Sigmoid colon (tissue), 7 donors: ENCODE measurements at regions of chr2 and their contacts with region 1.

Region 1: DNA sequence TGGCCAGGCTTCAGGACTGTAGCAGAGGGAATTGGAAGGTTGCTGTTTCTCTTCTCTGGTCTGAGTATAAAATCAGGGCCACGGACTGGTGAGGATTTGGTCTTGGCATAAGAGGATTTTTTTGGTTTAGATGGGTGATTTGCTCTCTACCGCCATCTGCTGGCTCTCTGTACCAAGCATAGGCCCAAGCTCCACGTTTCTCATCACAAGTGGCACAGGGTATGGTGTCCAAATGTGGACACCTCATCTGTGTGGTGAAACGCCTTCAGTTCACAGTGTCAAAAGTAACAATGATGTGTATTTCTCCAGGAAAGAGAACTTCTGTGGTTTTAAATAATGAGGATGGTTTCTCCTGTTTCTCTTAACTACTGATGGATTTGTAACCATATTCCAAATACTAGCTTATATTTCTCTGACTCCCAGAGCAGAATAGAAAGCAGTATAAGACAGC is 115.1 kb downstream of the EML6 start:
- DNase-seq: peak; percentile 81
- H3K4me3 ChIP-seq: no peak overlapping the region
- H3K27ac ChIP-seq: no peak overlapping the region
- H3K4me1 ChIP-seq: no peaks in the 10 kb centered on the region
- H3K27me3 ChIP-seq: no peaks in the 10 kb centered on the region
- CTCF ChIP-seq: peak; percentile 35 to 92 (median 76)
- EP300 ChIP-seq: no peak
- POLR2A ChIP-seq: no peak

Region 2: DNA sequence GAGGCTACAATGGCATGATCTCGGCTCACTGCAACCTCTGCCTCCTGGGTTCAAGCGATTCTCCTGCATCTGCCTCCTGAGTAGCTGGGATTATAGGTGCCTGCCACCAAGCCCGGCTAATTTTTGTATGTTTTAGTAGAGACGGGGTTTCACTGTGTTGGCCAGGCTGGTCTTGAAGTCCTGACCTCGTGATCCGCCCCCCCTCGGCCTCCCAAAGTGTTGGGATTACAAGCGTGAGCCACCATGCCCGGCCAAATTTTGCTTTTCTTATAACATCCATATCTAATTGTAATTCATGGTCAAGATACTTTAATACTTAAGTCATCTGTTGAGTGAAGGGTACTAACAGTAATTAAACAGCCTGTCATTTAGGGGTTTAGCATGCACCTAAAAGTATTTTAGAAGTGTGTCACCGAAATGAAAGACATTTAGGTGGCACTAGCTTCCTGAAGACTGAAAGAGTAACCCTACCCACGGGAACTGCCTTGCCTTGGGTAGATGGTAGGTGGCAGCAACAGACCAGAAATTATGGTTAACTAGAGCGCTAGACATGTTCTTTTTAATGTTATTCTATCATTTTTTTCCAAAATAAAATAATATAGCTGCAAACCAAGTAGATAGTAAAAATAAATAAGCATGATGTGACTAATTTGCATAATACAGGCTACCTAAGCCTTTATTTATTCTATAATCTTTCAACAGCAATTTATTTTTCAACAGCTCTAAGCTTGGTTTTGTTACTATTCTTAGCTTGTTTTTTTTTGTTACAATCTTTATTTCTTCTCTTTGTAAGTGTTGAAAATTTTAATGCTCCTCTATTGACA is 731.8 kb before region 1 on chr2:
- intact Hi-C with region 1: loop called (anchors 5 kb)
- DNase-seq: no peak
- H3K4me3 ChIP-seq: no peak overlapping the region
- H3K27ac ChIP-seq: no peak overlapping the region
- H3K4me1 ChIP-seq: peaks cover 0 to 7% (median 0%) of the 10 kb centered on the region in 4 donors
- H3K27me3 ChIP-seq: no peaks in the 10 kb centered on the region
- CTCF ChIP-seq: peak in 3 of 4 experiments; percentile 12 to 38 (median 22)
- EP300 ChIP-seq: no peak
- POLR2A ChIP-seq: no peak

Region 3: DNA sequence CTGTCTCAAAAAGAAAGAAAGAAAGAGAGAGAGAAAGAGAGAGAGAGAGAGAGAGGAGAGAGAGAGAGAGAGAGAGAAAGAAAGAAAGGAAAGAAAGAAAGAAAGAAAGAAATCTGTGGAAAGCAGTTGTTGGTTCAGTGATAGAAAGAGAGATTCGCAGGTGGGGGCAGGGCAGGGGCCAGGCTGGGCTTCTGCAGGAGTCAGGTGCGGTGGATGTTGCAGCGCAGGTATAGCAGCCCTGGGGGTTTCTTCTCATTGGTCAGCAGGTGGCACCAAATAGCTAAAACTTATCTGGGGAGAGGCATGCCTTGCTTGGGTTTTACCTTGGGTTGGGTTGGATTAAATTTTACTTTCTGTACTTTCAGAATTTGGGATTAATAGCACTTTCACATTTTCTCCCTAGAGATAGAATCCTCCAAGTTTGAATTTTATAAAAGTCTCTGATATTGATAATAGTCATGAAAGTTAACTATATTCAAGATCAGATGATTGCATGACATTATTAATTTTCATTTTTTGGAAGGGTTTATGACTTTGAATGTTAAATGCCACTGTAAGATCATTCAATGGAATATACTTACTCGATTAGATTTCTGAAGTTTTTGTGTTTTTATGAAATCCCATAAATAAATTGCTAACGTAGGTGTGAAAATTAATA is 315.9 kb before region 1 on chr2:
- intact Hi-C with region 1: loop called (anchors 5 kb)
- DNase-seq: no peak
- H3K4me3 ChIP-seq: no peak overlapping the region
- H3K27ac ChIP-seq: no peak overlapping the region
- H3K4me1 ChIP-seq: peaks cover 0 to 53% (median 32%) of the 10 kb centered on the region in 4 donors
- H3K27me3 ChIP-seq: no peaks in the 10 kb centered on the region
- CTCF ChIP-seq: peak; percentile 4 to 54 (median 44)
- EP300 ChIP-seq: no peak
- POLR2A ChIP-seq: no peak

Region 4: DNA sequence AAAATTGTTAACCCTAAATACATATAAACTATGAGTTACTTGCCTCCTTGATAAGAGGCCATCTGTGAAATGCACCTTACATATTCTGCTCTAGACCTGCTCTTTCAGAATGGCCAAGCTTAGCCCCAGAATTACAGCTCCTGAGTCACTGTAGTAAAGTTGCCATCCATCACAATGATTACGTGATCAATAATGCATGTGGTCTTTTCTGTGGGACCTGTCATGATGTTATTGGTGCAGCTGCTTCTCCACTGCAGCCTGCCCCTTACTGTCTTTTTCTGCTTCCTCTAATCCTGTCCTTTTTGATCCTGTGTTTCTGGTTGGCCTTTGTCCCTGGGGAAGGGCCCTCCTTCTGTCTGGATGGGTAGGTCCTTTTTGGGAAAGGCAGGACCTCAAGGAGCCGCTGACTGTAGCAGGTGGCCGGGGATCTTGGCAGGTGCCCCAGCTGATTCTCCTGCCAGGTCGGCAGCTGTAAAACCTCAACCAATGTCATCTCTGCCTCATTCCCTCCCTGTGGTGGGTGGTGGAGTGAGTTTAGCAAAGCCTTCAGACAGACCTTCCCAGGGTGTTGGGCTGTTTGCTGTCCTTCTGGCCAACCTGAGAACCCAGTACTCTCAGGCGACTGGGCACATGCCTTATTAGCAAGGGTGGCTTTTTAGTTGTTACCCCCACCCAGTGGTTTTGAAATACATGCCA is 241.3 kb before region 1 on chr2:
- intact Hi-C with region 1: no loop called
- DNase-seq: peak; percentile 90
- H3K4me3 ChIP-seq: no peak overlapping the region
- H3K27ac ChIP-seq: peak overlapping the region; percentile 57 to 69 (median 64)
- H3K4me1 ChIP-seq: peaks cover 0 to 75% (median 68%) of the 10 kb centered on the region in 4 donors
- H3K27me3 ChIP-seq: no peaks in the 10 kb centered on the region
- CTCF ChIP-seq: no peak
- EP300 ChIP-seq: peak in 1 of 4 donors; percentile 4
- POLR2A ChIP-seq: no peak

Region 5: GRCh38 chr2:54723131-54723995 is 115.2 kb before region 1 on chr2 and contains the start of gene EML6:
- intact Hi-C with region 1: loop called (anchors 5 kb)
- DNase-seq: peak; percentile 99
- H3K4me3 ChIP-seq: peak within 1 kb of the TSS; percentile 66 to 82 (median 70)
- H3K27ac ChIP-seq: peak within 1 kb of the TSS; percentile 78 to 83 (median 80)
- H3K4me1 ChIP-seq: peaks cover 0 to 22% (median 18%) of the 10 kb centered on the region in 4 donors
- H3K27me3 ChIP-seq: peaks cover 0 to 8% (median 0%) of the 10 kb centered on the region in 3 donors
- CTCF ChIP-seq: peak in 1 of 4 experiments; percentile 32
- EP300 ChIP-seq: no peak
- POLR2A ChIP-seq: peak in 1 of 2 donors; percentile 26
- total RNA-seq, gene EML6: 0.66 to 1.9 (median 1.2) TPM